Right ventricle myocardium inferior (tissue), 1 donor: ENCODE measurements at regions of chr6 and their contacts with region 1.

Region 1: GRCh38 chr6:106979427-106979884 is 4.9 kb upstream of the CD24 start:
- DNase-seq: peak; percentile 94
- ATAC-seq: peak; percentile 69

Region 2: GRCh38 chr6:106339334-106340029 is 640.0 kb before region 1 on chr6:
- intact Hi-C with region 1: loop called (anchors 5 kb)
- DNase-seq: no peak
- ATAC-seq: peak; percentile 85

Region 3: DNA sequence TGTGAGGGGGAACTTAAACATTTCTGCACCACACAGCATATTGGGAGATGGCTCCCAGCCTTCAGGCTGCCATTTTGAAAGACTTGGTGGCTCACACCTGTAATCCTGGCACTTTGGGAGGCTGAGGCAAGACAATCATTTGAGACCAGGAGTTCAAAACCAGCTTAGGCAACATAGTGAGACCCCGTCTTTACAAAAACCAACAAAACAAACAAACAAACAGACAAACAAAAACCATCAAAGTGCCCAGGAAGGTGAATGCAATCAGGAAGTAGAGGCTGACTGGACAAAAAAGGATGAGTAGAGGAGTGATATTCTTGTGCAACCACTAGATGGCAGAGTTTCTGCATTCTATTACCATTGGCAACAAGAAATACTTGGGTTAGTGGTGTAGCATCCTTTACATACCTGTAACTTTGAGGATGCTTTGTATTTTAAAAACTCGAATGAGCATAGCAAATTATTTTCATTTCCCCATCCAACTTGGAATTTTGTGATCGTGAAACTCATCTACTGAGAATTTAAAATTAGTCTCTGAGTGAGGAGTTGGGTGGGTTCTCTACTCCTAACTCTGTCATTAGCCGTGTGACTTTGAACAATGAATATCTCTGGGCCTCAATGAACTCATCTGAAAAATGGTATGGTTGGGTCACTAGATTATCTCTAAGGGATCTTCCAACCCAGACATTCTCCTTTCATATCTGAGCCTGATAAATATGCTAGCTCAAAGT is 534.5 kb before region 1 on chr6:
- intact Hi-C with region 1: loop called (anchors 2 kb)
- DNase-seq: no peak
- ATAC-seq: peak; percentile 57

Region 4: GRCh38 chr6:106560996-106561685 is 418.3 kb before region 1 on chr6:
- intact Hi-C with region 1: loop called (anchors 10 kb)
- DNase-seq: no peak
- ATAC-seq: no peak

Region 5: DNA sequence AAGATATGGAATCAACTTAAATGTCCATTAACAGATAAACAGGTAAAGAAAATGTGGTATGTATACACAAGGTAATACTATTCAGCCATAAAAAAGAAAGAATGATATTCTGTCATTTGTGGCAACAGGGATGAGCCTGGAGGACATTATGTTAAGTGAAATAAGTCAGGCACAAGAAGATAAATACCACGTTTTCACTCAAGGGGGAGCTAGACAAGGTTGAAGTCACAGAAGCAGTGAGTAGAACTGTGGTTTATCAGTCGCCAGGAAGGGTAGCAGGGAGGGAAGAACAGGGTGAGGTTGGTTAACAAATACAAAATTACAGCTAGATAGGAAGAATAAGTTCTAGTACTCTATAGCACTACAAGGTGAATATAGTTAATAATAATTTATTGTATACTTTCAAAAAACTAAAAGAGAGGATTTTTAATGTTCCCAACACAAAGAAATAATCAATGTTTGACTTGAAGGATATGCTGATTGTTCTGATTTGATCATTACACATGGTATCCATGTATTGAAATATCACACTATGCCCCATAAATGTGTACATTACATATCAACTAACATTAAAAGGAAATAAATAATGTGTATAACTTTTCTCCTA is 371.3 kb before region 1 on chr6:
- intact Hi-C with region 1: loop called (anchors 5 kb)
- DNase-seq: no peak
- ATAC-seq: no peak

Region 6: DNA sequence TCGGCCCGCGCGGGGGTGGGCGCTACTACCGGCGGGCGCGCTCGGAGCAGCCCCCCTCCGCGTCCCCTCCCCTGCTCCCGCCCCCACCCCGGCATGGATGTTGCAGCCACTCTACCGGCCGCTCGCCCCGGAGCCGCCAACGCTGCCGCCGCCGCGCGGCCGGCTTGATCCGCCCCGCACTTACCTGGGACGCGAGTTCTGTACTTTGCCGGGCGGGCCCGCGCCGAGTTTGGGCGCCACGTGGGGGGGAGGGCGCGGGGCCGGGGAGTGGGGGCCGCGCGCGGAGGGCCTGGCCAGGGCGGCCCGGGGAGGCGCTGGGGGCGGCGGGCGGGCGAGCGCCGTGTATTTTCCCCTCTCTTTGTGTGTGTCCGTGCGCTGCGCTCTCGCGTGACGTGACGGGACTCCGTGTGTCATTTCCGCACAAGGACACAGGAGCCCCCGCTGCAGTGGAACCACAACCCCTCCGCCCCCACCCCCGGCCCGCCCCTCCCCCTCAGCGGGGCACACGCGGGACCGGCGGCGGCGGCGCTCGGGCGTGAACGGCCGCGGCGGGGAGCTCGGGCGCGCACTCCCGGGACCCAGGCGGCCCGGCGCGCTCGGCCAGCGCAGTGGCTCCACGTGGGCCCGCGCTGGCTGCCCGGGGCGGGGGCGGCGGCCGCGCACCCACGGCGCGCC is 135.6 kb after region 1 on chr6 and contains the start of gene BEND3:
- intact Hi-C with region 1: no loop called
- DNase-seq: no peak
- ATAC-seq: peak; percentile 35
- total RNA-seq, gene BEND3: 1.6 TPM